Sigmoid colon (tissue), 7 donors: ENCODE measurements at regions of chr20 and their contacts with region 1.

Region 1: DNA sequence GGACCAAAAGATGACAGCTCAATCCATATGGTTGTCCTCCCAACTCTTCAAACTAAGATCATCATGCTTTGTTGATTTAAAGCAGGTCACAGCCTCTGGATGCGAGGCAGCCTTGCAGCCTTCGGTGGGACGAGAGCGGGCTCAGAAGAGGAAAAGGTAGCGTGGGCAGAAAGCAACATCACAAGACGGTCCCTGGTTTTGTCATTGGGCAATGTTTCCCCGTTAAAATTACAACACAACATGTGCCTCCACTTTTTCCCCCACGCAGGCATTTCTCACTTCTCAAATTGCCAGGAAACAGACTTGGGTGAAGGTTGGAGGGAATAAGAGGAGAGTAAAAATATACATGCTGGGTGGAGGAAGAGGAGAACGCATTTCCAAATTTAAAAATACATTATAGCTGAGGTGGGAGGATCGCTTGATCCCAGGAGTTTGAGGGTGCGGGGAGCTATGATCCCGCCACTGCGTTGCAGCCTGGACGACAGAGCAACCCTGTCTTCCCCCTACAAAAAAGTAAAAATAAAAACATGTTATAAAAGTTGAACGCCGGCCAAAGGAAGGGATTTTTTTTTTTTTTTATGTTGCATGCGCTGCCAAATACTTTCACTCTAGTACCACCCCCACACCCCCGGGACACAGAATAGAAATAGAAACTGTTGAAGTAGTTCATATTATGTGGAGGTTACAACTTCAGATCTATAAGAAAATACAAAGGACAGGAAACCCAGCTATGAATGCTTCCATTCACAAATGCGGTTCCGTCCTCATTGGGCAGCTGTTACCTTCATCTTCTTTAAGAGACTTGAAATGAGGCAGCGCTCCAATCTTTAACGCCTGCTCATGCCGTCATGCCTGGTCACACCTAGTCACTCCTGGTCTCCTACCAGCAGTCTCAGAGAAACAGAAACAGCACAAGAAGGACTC is 13.9 kb upstream of the NAA20 start:
- DNase-seq: peak; percentile 82
- H3K4me3 ChIP-seq: peak overlapping the region; percentile 3 to 31 (median 22)
- H3K27ac ChIP-seq: peak overlapping the region; percentile 59 to 77 (median 68)
- H3K4me1 ChIP-seq: peaks cover 0 to 36% (median 29%) of the 10 kb centered on the region in 4 donors
- H3K27me3 ChIP-seq: no peaks in the 10 kb centered on the region
- CTCF ChIP-seq: no peak
- EP300 ChIP-seq: peak in 2 of 4 donors; percentile 57 to 77
- POLR2A ChIP-seq: no peak

Region 2: DNA sequence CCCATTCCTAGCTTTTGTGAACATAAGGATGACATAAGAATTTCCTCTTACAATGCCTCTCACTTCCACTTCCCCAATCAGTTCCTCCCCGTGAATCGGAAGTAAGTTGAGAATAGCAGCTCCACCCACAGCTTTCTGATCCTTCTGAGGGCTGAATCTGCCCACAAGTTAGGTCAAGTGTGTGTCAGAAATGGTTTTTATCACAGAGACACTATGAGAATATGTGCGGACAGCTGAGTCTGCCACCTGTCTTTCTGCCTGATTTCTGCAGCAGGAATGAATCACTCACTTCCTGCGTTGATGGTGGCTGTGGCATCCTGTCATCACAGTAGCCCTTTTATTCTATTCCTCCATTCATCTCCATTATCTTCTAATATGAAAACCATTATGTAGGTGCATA is 175.1 kb before region 1 on chr20:
- intact Hi-C with region 1: no loop called
- DNase-seq: no peak
- H3K4me3 ChIP-seq: no peak overlapping the region
- H3K27ac ChIP-seq: no peak overlapping the region
- H3K4me1 ChIP-seq: peaks cover 0 to 7% (median under 1%) of the 10 kb centered on the region in 4 donors
- H3K27me3 ChIP-seq: no peaks in the 10 kb centered on the region
- CTCF ChIP-seq: no peak
- EP300 ChIP-seq: no peak
- POLR2A ChIP-seq: no peak

Region 3: DNA sequence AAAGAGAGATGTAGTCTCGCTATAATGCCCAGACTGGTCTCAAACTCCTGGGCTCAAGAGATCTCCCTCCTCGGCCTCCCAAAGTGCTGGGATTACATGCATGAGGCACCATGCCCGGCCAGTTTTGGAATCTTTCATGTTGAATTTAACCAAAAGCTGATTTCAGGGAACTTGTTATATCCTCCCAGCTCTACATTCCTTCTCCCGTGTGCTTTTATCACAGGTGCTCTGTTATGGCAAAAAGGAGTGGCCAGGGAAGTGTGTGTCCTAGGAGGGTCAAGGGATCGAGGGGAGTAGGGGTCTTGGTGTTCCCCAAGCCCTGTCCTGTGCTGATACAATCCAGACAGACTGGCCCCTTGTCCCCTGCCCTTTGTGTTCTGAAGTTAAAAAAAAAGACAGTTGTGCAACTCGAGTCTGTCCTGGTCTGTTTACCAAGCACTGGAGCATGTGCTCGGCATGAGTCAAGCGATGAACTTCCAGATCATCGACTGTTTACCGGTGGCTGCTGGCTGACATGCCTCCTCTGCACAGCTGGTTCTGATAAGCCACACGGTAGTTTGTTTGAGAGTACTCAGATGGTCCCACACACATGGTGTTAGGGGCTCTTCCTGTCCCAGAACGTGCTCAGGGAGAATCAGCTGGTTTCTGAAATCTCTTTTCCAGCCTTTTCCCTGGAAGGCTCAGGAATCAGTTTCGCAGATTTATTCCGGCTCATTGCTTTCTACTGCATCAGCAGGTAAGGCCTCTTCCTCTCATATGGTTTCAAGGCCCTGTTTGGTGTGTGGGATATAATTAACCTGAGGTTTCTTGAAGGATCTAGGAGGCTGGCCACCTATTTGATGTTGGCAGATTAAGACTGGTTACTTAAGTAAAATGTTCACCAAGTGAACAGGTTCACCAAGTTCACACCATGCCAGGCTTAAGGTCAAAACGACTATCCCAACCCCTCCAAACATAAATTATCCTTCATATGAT is 38.7 kb before region 1 on chr20:
- intact Hi-C with region 1: loop called (anchors 5 kb)
- DNase-seq: peak; percentile 94
- H3K4me3 ChIP-seq: no peak overlapping the region
- H3K27ac ChIP-seq: peak overlapping the region; percentile 34 to 62 (median 52)
- H3K4me1 ChIP-seq: peaks cover 0 to 14% (median 9%) of the 10 kb centered on the region in 4 donors
- H3K27me3 ChIP-seq: no peaks in the 10 kb centered on the region
- CTCF ChIP-seq: no peak
- EP300 ChIP-seq: peak in 1 of 4 donors; percentile 26
- POLR2A ChIP-seq: no peak

Region 4: GRCh38 chr20:20849161-20849560 is 845.9 kb after region 1 on chr20:
- intact Hi-C with region 1: no loop called
- DNase-seq: no peak
- H3K4me3 ChIP-seq: no peak overlapping the region
- H3K27ac ChIP-seq: no peak overlapping the region
- H3K4me1 ChIP-seq: no peaks in the 10 kb centered on the region
- H3K27me3 ChIP-seq: peaks cover 0 to 4% (median 0%) of the 10 kb centered on the region in 3 donors
- CTCF ChIP-seq: no peak
- EP300 ChIP-seq: no peak
- POLR2A ChIP-seq: no peak